Gastrocnemius medialis (tissue), 4 donors: ENCODE measurements at regions of chr2 and their contacts with region 1.

Region 1: DNA sequence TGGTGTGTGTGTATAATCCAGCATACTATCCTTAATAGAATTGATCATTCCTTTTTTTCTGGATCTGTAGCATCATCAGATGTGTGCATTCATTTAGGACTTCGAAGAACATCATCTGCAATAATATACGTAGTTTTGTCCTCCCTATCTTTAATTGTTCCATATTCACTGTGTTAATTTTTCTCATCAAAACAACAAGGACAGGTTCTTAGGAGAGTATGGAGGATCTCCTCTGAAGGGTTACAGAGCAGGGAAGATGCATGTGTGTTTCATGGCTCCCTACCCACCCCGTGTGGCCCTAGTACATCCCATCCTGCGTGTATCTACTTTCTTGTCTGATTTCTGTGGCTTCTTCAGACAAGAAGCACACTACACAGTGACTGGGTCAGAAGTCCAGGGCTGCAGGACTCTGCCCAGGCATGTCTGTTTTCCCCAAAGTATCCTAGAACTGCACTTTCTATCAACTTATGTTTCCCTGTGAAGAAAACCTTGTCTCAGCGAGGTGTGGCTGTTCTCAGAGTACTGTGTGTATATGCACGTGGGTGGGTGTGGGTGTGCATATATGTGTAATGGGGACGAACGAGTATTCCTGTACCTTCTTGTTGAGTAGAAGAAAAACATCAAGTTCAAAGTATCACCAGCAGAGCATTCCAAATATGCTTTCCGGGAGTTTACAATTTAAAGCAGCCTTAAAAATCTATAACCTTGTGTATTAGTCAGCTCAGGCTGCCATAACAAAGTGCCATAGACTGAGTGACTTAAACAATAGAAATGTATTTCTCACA is 220.4 kb upstream of the FOSL2 start:
- DNase-seq: no peak
- ATAC-seq: no peak
- H3K4me3 ChIP-seq: no peak overlapping the region
- H3K27ac ChIP-seq: no peak overlapping the region
- H3K4me1 ChIP-seq: peaks cover 0 to 10% of the 10 kb centered on the region in 2 donors
- H3K27me3 ChIP-seq: no peaks in the 10 kb centered on the region
- CTCF ChIP-seq: no peak
- POLR2A ChIP-seq: no peak

Region 2: DNA sequence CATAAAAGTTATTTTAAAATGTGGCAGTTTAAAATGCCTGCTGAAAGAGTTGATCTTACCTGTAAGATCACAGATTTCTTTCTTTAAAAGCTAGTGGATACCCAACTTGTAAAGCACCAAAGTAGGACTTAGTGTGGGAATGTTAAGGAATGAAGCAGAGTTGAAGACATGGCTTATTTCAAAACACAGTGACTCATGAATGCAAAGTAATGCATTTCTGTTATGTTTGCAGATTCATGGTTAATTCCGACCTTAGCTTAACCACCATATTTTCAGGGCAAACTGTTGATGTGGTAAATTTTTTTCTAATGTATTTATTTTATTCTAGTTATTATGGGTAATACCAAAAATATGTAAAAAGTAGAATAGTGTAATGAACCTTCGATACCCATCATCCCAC is 13.6 kb after region 1 on chr2:
- in situ Hi-C with region 1: no loop called
- intact Hi-C with region 1: loop called (anchors 1 kb)
- DNase-seq: no peak
- ATAC-seq: no peak
- H3K4me3 ChIP-seq: no peak overlapping the region
- H3K27ac ChIP-seq: no peak overlapping the region
- H3K4me1 ChIP-seq: peaks cover 3 to 11% of the 10 kb centered on the region in 2 donors
- H3K27me3 ChIP-seq: no peaks in the 10 kb centered on the region
- CTCF ChIP-seq: no peak
- POLR2A ChIP-seq: no peak